ENCODE measurements at regions of chr5 and their contacts with region 1.

Region 1: DNA sequence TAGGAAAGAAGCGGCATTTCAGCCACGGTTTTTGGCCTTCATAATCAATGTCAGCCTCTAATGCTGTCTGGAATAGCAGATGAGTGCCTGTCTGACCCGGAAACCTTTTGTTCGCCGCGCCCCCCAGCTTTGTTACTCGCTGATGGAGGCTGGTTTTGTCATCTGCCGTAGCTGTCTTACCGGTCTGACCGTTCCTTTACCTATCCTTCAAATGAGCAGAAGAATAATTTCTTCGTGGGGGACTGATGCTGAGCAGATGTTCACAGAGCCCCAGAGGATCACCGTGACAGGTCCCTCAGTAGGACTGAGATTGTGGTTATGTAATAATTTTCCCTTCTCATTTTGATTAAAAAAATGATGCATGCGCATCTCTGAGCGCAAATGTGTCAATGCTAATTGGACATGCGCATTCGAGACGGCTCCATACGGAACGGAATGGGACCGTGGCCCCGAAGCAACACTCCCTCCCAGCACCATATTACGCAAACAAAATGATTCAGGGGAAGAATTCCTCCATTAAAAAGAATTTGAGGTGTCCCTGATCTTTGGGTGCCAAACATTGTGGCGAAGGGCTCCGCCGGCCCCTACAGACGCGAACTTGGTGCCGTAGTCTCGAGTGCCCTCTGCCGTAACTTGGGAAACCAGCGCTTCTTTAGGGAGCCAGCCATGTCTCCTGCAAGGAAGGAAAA is 27.6 kb downstream of the TLX3 start:
- DNase-seq: no peak
- ATAC-seq: no peak
- H3K4me3 ChIP-seq: peak overlapping the region in 3 of 4 donors; percentile 23 to 51 (median 44)
- H3K27ac ChIP-seq: no peak overlapping the region
- H3K4me1 ChIP-seq: no peaks in the 10 kb centered on the region
- H3K27me3 ChIP-seq: peaks cover 14 to 48% (median 37%) of the 10 kb centered on the region in 3 donors
- CTCF ChIP-seq: peak in 3 of 5 experiments; percentile 12 to 41 (median 32)
- POLR2A ChIP-seq: no peak

Region 2: GRCh38 chr5:171207256-171207847 is 129.3 kb before region 1 on chr5:
- in situ Hi-C with region 1: loop called in 1 of 4 experiments (anchors 10 kb)
- intact Hi-C with region 1: loop called (anchors 2 kb)
- DNase-seq: no peak
- ATAC-seq: no peak
- H3K4me3 ChIP-seq: no peak overlapping the region
- H3K27ac ChIP-seq: no peak overlapping the region
- H3K4me1 ChIP-seq: no peaks in the 10 kb centered on the region
- H3K27me3 ChIP-seq: no peaks in the 10 kb centered on the region
- CTCF ChIP-seq: peak in 2 of 5 experiments; percentile 34 to 35
- POLR2A ChIP-seq: no peak